WTC11 (cell line): ENCODE measurements at regions of chr19 and their contacts with region 1.

Region 1: DNA sequence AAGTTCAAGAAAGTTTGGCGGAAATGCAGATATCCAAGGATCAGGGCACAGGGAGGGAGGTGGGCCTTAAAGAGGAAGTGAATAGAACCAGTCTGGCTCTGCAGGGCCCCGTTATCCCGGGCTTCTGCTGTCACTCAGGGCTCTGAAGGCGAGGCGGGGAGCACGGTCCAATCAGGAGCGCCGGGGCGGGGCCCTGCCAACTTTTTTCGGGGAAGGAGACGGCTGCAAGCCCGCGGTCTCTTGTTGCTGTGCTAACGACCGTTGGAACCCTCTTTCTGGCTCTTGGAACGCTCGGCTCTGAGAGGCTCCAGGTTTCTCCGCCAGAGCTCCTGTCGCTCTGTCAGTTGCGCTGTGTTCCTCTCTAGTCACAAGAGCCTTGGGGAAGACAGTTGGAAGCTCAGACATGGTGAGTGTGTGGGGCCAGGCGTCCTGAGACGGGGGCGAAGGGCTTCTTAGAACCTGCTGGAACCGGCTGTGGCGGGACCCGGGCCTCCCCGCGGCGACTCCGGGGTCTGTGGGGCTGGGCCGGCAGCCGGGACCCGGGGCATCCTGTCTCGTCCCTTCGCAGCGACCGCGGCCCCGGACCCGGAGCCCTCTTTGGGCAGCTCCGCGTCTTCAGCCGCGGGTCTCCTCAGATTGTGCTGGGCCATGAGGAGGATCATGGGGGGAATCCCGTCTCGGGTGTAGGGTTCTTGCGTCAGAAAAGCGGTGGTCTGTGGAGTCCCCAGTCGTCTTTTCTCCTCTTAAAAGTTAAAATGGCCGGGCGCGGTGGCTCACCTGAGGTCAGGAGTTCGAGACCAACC is 27.7 kb downstream of the ZNF844 start:
- DNase-seq: peak; percentile 94
- ATAC-seq: peak; percentile 98
- H3K4me3 Mint-ChIP-seq: peak overlapping the region; percentile 89
- H3K27ac Mint-ChIP-seq: peak overlapping the region; percentile 97
- H3K4me1 Mint-ChIP-seq: peaks cover 12% of the 10 kb centered on the region
- H3K27me3 Mint-ChIP-seq: no peaks in the 10 kb centered on the region
- CTCF ChIP-seq: no peak

Region 2: DNA sequence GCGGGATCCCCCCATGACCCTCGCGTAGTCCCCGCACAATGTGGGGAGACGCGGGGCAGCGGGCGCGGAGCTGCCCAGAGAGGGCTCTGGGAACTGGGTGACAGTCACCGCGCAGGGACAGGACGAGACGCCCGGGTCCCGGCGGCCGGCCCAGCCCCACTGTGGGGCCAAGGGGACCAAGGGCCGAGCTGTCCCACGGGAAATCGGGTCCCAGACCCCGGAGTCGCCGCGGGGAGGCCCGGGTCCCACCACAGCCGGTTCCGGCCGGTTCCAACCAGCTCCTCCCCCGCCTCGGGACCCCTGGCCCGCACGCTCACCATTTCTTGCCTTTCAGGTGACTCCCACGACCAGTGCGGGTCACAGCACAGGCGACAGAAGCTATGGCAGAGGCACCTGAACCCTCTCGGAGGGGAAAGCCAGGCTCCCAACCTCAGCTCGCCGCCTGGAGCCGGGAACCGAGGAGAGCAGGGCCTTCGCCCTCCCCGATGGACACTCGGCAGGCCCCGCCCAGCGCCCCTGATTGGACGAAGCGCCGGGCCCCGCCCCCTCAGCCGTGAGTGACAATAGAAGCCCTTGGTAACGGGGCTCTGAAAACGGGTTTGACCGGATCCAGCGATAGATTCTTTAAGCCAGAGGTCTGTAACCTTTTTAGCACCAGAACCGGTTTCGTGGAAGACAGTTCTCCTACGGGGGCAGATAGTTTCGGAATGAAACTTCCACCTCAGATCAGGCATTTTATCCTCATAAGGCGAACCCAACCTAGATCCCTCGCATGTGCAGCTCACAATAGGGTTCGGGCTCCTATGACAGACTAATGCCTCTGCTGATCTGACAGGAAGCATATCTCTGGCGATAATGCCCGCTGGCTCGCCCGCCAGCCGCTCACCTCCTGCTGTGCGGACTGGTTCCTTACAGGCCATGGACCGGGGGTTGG is 56.8 kb before region 1 on chr19 and contains the start of gene ZNF433:
- CTCF ChIA-PET with region 1: interaction called, 10 read pairs
- POLR2A ChIA-PET with region 1: no interaction called
- DNase-seq: peak; percentile 99
- ATAC-seq: peak; percentile 98
- H3K4me3 Mint-ChIP-seq: peak within 1 kb of the TSS; percentile 83
- H3K27ac Mint-ChIP-seq: peak within 1 kb of the TSS; percentile 93
- H3K4me1 Mint-ChIP-seq: peaks cover 26% of the 10 kb centered on the region
- H3K27me3 Mint-ChIP-seq: peaks cover 32% of the 10 kb centered on the region
- CTCF ChIP-seq: no peak
- total RNA-seq, gene ZNF433: 2.9 TPM in 3 replicates

Region 3: GRCh38 chr19:12064590-12065538 is 27.4 kb before region 1 on chr19 and contains the start of gene ZNF844:
- CTCF ChIA-PET with region 1: interaction called, 73 read pairs
- POLR2A ChIA-PET with region 1: interaction called, 6 read pairs
- DNase-seq: peak; percentile 98
- ATAC-seq: peak; percentile 94
- H3K4me3 Mint-ChIP-seq: peak within 1 kb of the TSS; percentile 87
- H3K27ac Mint-ChIP-seq: peak within 1 kb of the TSS; percentile 97
- H3K4me1 Mint-ChIP-seq: peaks cover 12% of the 10 kb centered on the region
- H3K27me3 Mint-ChIP-seq: no peaks in the 10 kb centered on the region
- CTCF ChIP-seq: no peak
- total RNA-seq, gene ZNF844: 9.1 to 10.5 TPM (median 9.4 TPM) in 3 replicates

Region 4: GRCh38 chr19:12126707-12127106 is 34.4 kb after region 1 on chr19:
- CTCF ChIA-PET with region 1: interaction called, 39 read pairs
- POLR2A ChIA-PET with region 1: no interaction called
- DNase-seq: peak; percentile 22
- ATAC-seq: peak; percentile 53
- H3K4me3 Mint-ChIP-seq: no peak overlapping the region
- H3K27ac Mint-ChIP-seq: 0 out of 2 replicates have a peak overlapping the region, but pooled peaks have one; percentile 37
- H3K4me1 Mint-ChIP-seq: 0 out of 2 replicates have a peak, but pooled peaks cover 4% of the 10 kb centered on the region
- H3K27me3 Mint-ChIP-seq: no peaks in the 10 kb centered on the region; the same call in 1 of the 2 replicates
- CTCF ChIP-seq: peak; percentile 39; the same call in 1 of the 2 replicates

Region 5: GRCh38 chr19:12162882-12163806 is 70.9 kb after region 1 on chr19 and contains the start of gene ZNF136:
- CTCF ChIA-PET with region 1: interaction called, 15 read pairs
- POLR2A ChIA-PET with region 1: no interaction called
- DNase-seq: peak; percentile 96
- ATAC-seq: peak; percentile 96
- H3K4me3 Mint-ChIP-seq: peak within 1 kb of the TSS; percentile 94
- H3K27ac Mint-ChIP-seq: peak within 1 kb of the TSS; percentile 97
- H3K4me1 Mint-ChIP-seq: peaks cover 8% of the 10 kb centered on the region
- H3K27me3 Mint-ChIP-seq: peaks cover 5% of the 10 kb centered on the region
- CTCF ChIP-seq: no peak
- total RNA-seq, gene ZNF136: 6.2 to 6.7 TPM (median 6.7 TPM) in 3 replicates